ENCODE measurements at regions of chr2 and their contacts with region 1.

Region 1: DNA sequence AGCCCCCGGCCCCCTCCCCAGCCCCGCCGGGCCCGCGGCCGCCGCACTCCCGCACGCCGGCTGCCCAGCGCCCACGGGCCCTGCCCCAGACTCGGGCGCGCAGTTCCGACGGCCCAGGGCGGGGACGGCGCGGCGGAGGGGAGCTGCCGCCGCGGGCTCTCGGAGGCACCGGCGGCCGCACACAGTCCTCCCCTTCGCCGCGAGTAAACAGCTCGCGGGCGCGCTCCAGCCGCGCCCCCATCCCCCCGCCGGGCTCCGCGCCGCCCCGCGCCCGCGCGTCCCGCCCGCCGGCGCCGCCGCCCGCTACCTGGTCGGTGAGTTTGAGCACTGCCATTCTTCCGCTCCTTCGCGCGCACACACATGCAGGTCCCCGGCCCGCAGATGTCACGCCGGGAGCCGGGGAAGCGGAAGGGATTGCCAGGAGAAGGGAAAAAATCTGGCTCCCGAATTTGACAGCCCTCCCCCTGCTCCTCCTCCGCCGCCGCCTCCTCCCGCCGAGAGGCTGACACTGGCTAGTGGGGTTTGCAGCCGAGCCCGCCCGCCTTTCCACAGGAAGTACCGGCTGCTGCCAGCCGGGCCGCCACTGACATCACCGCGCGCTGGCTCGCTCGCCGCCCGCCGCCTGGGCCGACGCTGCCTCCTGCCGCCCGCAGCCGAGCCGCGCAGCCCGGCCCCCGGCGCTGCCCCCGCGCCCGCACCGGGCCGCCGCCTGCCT is at the start of gene ANKRD44:
- DNase-seq: peak; percentile 89
- H3K4me3 Mint-ChIP-seq: peak within 1 kb of the TSS; percentile 90
- H3K27ac Mint-ChIP-seq: peak within 1 kb of the TSS; percentile 95
- H3K4me1 Mint-ChIP-seq: peaks cover 53% of the 10 kb centered on the region
- H3K27me3 Mint-ChIP-seq: no peaks in the 10 kb centered on the region
- total RNA-seq, gene ANKRD44: 214 to 246 TPM

Region 2: DNA sequence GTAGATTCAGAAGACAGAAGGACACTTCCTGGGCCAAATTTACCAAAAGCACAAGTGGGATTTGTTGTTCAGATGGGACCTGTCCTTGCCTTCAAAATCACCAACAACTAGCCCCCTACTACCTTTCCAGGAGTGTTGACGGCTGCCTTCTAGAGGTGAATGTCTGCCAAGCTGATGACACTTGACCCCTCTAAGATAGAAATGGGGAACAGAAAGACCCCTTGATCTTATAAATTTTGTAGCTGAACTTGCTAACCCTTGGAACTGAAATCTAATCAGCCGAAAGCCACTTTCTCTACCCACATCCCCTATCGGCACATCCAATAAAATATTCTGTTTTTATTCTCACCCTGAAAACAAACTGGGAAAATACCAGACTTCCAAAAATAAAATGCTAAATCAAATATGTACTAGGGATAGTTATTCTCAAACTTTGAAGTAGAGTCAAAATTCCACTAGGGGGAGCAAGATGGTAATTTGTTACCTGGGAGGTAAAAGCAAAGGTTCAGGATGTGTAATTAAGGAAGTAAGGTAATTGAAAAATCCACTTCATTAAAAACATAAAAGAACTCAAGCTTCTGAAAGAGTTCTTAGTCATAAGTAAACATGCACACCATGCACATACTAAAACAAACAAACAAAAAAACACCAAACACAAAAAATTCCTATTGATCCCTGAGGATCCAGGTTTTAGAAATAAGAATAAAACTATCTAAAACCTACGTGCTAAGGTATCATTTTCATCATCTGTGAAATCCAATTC is 119.1 kb before region 1 on chr2:
- CTCF ChIA-PET with region 1: interaction called, 55 read pairs
- POLR2A ChIA-PET with region 1: interaction called, 92 read pairs
- DNase-seq: no peak
- H3K4me3 Mint-ChIP-seq: no peak overlapping the region
- H3K27ac Mint-ChIP-seq: peak overlapping the region; percentile 32
- H3K4me1 Mint-ChIP-seq: peaks cover 72% of the 10 kb centered on the region
- H3K27me3 Mint-ChIP-seq: no peaks in the 10 kb centered on the region

Region 3: GRCh38 chr2:197239434-197239833 is 71.0 kb before region 1 on chr2:
- CTCF ChIA-PET with region 1: interaction called, 18 read pairs
- POLR2A ChIA-PET with region 1: interaction called, 122 read pairs
- DNase-seq: no peak
- H3K4me3 Mint-ChIP-seq: peak overlapping the region; percentile 73
- H3K27ac Mint-ChIP-seq: peak overlapping the region; percentile 89
- H3K4me1 Mint-ChIP-seq: peaks cover 85% of the 10 kb centered on the region
- H3K27me3 Mint-ChIP-seq: no peaks in the 10 kb centered on the region

Region 4: DNA sequence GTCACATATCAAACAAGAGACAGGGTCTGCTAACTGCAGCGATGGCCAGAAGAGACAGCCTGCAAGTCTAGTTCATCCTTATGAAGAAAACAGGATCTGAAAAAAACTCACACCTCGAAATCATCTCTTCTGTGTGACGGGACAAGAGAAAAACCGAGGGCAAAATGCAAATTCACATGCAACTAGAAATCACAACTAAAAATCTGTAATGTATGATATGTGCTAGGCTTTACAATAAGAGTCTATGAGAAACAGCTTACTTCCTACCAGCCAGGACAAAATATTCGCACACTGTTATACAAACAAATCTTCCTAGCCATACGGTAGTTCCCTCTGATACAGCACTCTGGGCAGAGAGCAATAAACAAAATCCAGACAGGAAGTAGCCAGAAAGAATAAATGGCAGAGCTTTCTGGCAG is 48.6 kb before region 1 on chr2:
- CTCF ChIA-PET with region 1: interaction called, 10 read pairs
- POLR2A ChIA-PET with region 1: interaction called, 132 read pairs
- DNase-seq: no peak
- H3K4me3 Mint-ChIP-seq: no peak overlapping the region
- H3K27ac Mint-ChIP-seq: peak overlapping the region; percentile 67
- H3K4me1 Mint-ChIP-seq: peaks cover 87% of the 10 kb centered on the region
- H3K27me3 Mint-ChIP-seq: no peaks in the 10 kb centered on the region

Region 5: GRCh38 chr2:197327472-197328098 is 17.2 kb after region 1 on chr2:
- CTCF ChIA-PET with region 1: interaction called, 4 read pairs
- POLR2A ChIA-PET with region 1: interaction called, 28 read pairs
- DNase-seq: no peak
- H3K4me3 Mint-ChIP-seq: no peak overlapping the region
- H3K27ac Mint-ChIP-seq: peak overlapping the region; percentile 63
- H3K4me1 Mint-ChIP-seq: peaks cover 49% of the 10 kb centered on the region
- H3K27me3 Mint-ChIP-seq: no peaks in the 10 kb centered on the region

Region 6: DNA sequence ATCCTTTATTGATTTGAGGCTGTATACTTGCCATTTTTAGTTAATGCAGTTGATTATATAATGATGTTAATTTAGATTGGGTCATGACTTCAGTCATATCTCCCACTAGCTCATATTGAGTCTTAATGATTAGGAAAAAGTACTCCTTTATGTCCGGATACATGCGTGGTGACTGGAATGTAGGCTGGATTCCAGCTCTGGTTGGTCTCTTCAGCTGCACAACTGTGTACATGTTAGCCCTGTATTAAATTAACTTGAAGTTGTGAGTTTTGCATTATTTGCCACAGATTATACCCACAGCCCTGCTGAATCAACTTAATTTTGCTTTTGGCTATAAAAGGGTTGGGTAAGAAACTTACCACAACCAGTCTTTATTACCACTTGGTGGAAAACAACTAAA is 228.0 kb after region 1 on chr2:
- CTCF ChIA-PET with region 1: no interaction called
- POLR2A ChIA-PET with region 1: no interaction called
- DNase-seq: no peak
- H3K4me3 Mint-ChIP-seq: no peak overlapping the region
- H3K27ac Mint-ChIP-seq: no peak overlapping the region
- H3K4me1 Mint-ChIP-seq: peaks cover 27% of the 10 kb centered on the region
- H3K27me3 Mint-ChIP-seq: no peaks in the 10 kb centered on the region